Heart left ventricle (tissue), 16 donors: ENCODE measurements at regions of chr9 and their contacts with region 1.

Region 1: GRCh38 chr9:19720377-19720776 is 68.5 kb downstream of the SLC24A2 start:
- DNase-seq: peak in 1 of 5 donors; percentile 7
- ATAC-seq: no peak
- H3K4me3 ChIP-seq: no peak overlapping the region
- H3K27ac ChIP-seq: no peak overlapping the region
- H3K4me1 ChIP-seq: no peaks in the 10 kb centered on the region
- H3K27me3 ChIP-seq: peaks cover 0 to 3% (median 0%) of the 10 kb centered on the region in 9 donors
- CTCF ChIP-seq: no peak
- POLR2A ChIP-seq: no peak

Region 2: DNA sequence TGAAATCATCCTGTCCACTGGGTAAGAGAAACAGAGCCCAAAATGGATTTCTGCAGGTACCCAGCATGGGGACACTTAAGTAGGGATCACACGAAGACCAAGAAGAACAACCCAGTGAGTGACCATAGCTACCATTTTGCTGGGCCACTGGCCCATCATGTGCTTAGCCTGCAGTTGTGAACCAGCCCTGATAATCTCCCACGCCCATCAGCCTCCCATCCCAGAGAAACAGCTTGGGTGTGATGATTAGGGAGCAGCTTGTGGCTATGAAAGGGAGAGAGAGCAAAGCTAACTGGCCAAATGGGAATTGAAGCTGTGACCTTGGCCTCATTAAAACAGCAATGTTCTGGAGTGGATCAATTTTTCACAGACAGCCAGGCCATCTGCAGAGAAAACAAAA is 70.1 kb before region 1 on chr9:
- intact Hi-C with region 1: loop called in 1 of 10 experiments (anchors 10 kb)
- DNase-seq: no peak
- ATAC-seq: no peak
- H3K4me3 ChIP-seq: no peak overlapping the region
- H3K27ac ChIP-seq: no peak overlapping the region
- H3K4me1 ChIP-seq: no peaks in the 10 kb centered on the region
- H3K27me3 ChIP-seq: no peaks in the 10 kb centered on the region
- CTCF ChIP-seq: no peak
- POLR2A ChIP-seq: no peak

Region 3: DNA sequence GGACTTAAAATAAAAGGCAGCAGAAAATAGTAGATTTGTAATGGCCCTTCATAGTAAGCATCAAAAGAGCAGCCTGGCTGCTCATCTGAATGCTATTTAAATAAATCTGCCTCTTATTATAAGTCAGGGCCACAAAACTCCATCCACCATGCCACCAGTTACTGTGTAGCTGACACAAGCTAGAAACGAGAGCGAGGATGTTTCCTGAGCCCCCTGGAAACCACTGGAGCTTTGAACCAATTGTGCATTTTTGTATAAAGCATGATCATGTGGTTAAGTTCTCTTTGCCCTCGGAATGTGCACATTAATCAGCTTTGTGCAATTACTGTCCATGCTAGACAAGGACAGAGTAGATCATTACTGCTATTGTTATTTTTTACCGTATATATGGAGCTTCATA is 51.1 kb after region 1 on chr9:
- intact Hi-C with region 1: no loop called
- DNase-seq: no peak
- ATAC-seq: no peak
- H3K4me3 ChIP-seq: no peak overlapping the region
- H3K27ac ChIP-seq: no peak overlapping the region
- H3K4me1 ChIP-seq: no peaks in the 10 kb centered on the region
- H3K27me3 ChIP-seq: peaks cover 0 to 6% (median 0%) of the 10 kb centered on the region in 9 donors
- CTCF ChIP-seq: no peak
- POLR2A ChIP-seq: no peak